Dorsolateral prefrontal cortex (tissue), 120 donors: ENCODE measurements at regions of chr5 and their contacts with region 1.

Region 1: GRCh38 chr5:37837414-37838032 is 2.3 kb downstream of the GDNF start:
- DNase-seq: peak; percentile 62 to 88 (median 78)
- H3K4me3 ChIP-seq: peak overlapping the region; percentile 33 to 77 (median 61)
- H3K27ac ChIP-seq: peak overlapping the region in 43 of 59 donors; percentile 10 to 85 (median 64)
- H3K27me3 ChIP-seq: peaks cover 0 to 100% (median 69%) of the 10 kb centered on the region in 45 donors
- CTCF ChIP-seq: peak; percentile 54 to 93 (median 86)

Region 2: GRCh38 chr5:37412515-37413277 is 424.8 kb before region 1 on chr5:
- intact Hi-C with region 1: loop called in 1 of 2 experiments (anchors 5 kb)
- DNase-seq: peak in 4 of 10 donors; percentile 32 to 69 (median 54)
- H3K4me3 ChIP-seq: no peak overlapping the region
- H3K27ac ChIP-seq: no peak overlapping the region
- H3K27me3 ChIP-seq: no peaks in the 10 kb centered on the region
- CTCF ChIP-seq: peak; percentile 48 to 91 (median 82)

Region 3: DNA sequence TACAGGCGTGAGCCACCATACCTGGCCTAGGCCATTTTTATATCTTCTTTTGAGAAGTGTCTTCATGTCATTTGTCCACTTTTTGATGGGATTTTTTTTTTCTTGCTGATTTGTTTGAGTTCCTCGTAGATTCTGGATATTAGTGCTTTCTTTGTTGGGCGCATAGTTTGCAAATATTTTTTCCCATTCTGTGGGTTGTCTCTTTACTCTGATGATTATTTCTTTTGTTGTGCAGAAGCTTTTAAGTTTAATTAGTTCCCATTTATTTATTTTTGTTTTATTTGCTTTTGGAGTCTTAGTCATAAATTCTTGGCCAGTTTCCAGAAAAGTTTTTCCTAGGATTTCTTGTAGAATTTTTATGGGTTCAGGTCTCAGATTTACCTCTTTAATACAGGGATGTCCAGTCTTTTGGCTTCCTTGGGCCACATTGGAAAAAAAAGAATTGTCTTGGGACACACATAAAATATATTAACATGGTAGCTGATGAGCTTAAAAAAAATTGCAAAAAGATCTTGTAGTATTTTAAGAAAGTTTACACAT is 336.4 kb before region 1 on chr5:
- intact Hi-C with region 1: no loop called
- DNase-seq: no peak
- H3K4me3 ChIP-seq: no peak overlapping the region
- H3K27ac ChIP-seq: no peak overlapping the region
- H3K27me3 ChIP-seq: no peaks in the 10 kb centered on the region
- CTCF ChIP-seq: no peak

Region 4: GRCh38 chr5:37722236-37723146 is 115.0 kb before region 1 on chr5:
- intact Hi-C with region 1: loop called in 1 of 2 experiments (anchors 5 kb)
- DNase-seq: no peak
- H3K4me3 ChIP-seq: no peak overlapping the region
- H3K27ac ChIP-seq: peak overlapping the region in 1 of 59 donors; percentile 15
- H3K27me3 ChIP-seq: no peaks in the 10 kb centered on the region
- CTCF ChIP-seq: no peak

Region 5: DNA sequence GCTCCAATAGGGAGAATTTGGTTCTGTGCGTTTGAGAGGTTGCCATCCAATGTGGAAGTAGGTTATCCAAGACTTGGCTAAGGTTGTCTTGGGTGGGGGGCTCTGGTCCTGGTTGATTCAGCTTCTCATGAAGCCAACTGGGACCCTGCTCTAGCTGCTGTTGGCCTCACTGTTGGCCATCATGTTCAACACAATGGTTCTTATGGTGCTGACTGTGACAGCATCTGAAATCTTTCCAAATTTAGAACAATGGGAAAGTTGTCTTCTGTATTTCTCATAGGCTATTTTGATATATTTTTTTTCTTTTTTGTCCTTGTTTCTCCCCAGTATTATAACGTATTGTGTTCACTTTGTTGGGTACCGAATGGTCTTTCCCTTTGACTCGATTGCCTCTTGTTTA is 69.6 kb before region 1 on chr5:
- intact Hi-C with region 1: loop called in 1 of 2 experiments (anchors 2 kb)
- DNase-seq: peak in 2 of 10 donors; percentile 24 to 39
- H3K4me3 ChIP-seq: peak overlapping the region in 3 of 59 donors; percentile 9 to 20 (median 10)
- H3K27ac ChIP-seq: peak overlapping the region; percentile 22 to 97 (median 87)
- H3K27me3 ChIP-seq: no peaks in the 10 kb centered on the region
- CTCF ChIP-seq: peak in 3 of 56 donors; percentile 3 to 20 (median 10)

Region 6: GRCh38 chr5:37814699-37815098 is 22.8 kb before region 1 on chr5:
- intact Hi-C with region 1: loop called in 1 of 2 experiments (anchors 2 kb)
- DNase-seq: no peak
- H3K4me3 ChIP-seq: no peak overlapping the region
- H3K27ac ChIP-seq: no peak overlapping the region
- H3K27me3 ChIP-seq: peaks cover 0 to 8% (median 0%) of the 10 kb centered on the region in 45 donors
- CTCF ChIP-seq: no peak

Region 7: DNA sequence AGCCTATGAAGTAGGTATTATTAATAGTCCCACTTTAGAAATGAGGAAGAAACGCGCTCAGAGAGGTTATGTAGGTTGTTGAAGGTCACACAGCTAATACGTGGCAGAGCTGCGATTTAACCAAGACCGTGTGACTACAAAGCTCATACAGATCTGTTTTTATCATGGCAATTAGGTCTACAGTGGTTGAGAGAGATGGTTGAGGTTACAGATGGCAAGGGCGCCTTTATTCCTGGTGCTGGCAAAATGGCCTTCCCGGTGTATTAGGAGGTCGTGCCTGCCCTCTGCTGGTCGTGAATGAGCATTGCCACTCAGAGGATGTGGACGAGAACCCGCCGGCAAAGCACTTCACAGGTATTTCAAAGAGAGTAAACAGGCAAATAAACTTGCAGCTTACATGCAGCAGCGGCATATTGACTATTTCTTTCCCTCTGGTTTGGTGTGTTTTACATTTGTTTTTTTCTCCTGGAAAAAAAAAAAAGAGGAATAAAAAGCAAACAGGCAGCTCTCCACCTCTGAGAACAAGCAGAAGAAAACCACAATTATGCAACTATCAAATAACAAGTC is 355.6 kb after region 1 on chr5:
- intact Hi-C with region 1: loop called (anchors 1 to 2 kb)
- DNase-seq: peak; percentile 68 to 85 (median 72)
- H3K4me3 ChIP-seq: no peak overlapping the region
- H3K27ac ChIP-seq: no peak overlapping the region
- H3K27me3 ChIP-seq: peaks cover 0 to 21% (median 3%) of the 10 kb centered on the region in 45 donors
- CTCF ChIP-seq: peak; percentile 73 to 98 (median 91)